A673 (cell line): ENCODE measurements at regions of chr15 and their contacts with region 1.

Region 1: DNA sequence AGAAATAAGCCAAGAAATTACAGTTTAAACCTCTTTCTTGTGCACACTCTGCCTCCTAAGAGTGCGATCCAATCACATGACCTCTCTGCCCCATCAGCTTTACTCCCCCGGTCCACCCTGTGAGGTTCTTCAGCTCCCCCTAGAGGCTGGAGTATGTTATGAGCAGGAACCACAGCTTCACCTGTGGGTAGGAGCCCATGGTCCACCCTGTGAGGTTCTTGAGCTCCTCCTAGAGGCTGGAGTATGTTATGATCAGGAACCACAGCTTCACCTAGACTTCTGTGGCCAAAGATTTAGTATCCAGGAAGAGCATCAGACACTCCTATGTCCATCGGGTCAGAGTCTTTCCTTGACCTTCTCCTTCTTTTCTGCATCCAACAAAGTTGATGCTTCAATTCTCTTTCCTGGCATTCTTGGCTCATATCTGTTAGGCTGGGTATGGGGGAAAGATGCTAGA is 163.9 kb downstream of the MINAR1 start:
- DNase-seq: peak; percentile 94
- H3K4me3 ChIP-seq: no peak overlapping the region
- H3K27ac ChIP-seq: no peak overlapping the region
- H3K4me1 ChIP-seq: no peaks in the 10 kb centered on the region
- H3K27me3 ChIP-seq: peaks cover 9% of the 10 kb centered on the region
- CTCF ChIP-seq: peak; percentile 99

Region 2: DNA sequence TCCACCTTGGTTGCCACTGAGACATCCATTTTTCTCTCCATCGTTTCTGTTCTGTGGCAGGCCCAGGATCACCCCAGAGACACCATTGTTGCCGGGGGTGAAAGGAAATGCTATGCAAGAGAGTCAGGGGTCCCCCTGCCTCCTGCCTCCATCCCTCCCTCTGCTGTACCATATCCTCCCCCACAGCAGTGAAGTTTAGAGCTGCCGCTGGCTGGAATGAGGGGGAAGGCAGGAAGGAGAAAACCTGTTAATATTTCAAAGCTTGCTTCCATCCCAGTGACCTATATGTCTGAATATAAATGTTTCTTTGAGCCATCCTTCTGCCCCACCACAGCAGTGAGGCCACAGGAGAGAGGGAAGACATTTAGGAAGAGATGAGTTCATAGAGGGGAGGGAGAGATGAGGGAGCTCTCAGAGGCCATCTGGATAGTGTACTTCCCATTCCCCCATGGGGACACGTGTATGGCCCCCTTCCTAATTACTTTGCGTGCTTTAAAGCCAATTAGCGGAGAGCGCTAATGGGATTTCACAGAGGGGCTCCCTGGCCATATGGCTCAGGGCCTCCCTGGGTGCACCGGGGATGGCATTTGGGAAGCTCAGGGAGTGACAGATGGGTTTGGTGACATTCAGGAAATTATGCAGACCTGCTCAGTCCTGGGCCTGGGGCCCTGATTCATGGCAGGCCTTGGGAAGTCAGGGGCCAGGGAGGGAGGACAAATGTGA is 914.6 kb before region 1 on chr15:
- CTCF ChIA-PET with region 1: no interaction called
- POLR2A ChIA-PET with region 1: no interaction called
- intact Hi-C with region 1: no loop called
- DNase-seq: peak; percentile 71
- H3K4me3 ChIP-seq: no peak overlapping the region
- H3K27ac ChIP-seq: no peak overlapping the region
- H3K4me1 ChIP-seq: peaks cover 18% of the 10 kb centered on the region
- H3K27me3 ChIP-seq: peaks cover 87% of the 10 kb centered on the region
- CTCF ChIP-seq: no peak

Region 3: DNA sequence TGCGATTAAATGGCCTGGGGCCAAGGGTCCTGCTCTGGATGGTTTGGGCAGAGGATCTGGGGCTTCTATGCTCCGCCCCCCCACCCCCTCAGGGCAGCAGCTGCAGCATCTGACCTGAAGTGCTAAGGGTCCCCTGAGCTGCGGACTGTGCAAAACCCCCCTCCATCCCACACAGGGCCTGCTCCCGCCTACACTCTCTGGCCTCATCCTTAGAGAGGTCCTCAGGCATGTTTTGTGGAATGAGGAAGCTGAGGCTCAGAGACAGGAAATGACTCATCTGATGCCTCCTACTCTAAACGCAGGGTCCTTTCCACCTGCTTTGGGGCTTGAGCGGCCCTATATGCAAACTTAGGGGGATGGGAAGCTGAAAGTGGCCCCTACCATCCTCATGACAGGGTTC is 591.7 kb before region 1 on chr15:
- CTCF ChIA-PET with region 1: no interaction called
- POLR2A ChIA-PET with region 1: no interaction called
- intact Hi-C with region 1: no loop called
- DNase-seq: peak; percentile 88
- H3K4me3 ChIP-seq: no peak overlapping the region
- H3K27ac ChIP-seq: peak overlapping the region; percentile 46
- H3K4me1 ChIP-seq: peaks cover 17% of the 10 kb centered on the region
- H3K27me3 ChIP-seq: no peaks in the 10 kb centered on the region
- CTCF ChIP-seq: no peak

Region 4: DNA sequence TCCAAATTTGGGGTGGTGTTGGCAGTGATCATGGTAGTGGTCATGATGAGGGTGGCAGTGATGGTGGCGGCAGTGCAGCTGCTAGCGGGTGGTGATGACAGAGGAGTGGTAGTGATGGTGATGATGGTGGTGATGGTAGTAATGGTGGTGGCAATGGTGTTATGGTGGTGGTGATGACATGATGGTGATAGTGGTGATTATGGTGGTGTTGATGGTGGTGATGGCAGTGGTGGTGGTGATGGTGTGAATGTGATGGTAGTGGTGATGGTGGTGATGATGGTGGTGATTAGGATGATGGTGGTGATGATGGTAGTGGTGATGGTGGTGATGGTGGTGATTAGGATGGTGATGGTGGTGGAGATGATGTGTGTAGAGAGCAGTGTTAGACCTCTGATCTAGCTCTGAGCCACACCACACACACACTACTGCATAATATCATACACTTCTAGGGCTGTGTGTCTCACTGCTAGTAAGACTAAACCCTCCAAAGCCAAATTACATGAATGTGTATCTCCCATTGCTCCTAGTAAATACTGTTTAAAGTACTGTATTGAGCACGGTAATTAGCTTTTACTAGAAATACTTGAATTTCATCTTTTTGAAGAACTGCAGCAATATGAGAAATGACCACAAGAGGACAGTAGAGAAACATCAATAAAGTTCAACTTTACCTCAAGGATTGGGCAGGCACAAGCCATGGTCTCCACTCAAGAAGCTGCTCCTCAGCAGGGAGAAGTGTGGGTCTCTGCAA is 256.3 kb before region 1 on chr15:
- CTCF ChIA-PET with region 1: interaction called, 19 read pairs
- POLR2A ChIA-PET with region 1: no interaction called
- intact Hi-C with region 1: loop called (anchors 2 kb)
- DNase-seq: peak; percentile 58
- H3K4me3 ChIP-seq: no peak overlapping the region
- H3K27ac ChIP-seq: no peak overlapping the region
- H3K4me1 ChIP-seq: no peaks in the 10 kb centered on the region
- H3K27me3 ChIP-seq: no peaks in the 10 kb centered on the region
- CTCF ChIP-seq: peak; percentile 77

Region 5: DNA sequence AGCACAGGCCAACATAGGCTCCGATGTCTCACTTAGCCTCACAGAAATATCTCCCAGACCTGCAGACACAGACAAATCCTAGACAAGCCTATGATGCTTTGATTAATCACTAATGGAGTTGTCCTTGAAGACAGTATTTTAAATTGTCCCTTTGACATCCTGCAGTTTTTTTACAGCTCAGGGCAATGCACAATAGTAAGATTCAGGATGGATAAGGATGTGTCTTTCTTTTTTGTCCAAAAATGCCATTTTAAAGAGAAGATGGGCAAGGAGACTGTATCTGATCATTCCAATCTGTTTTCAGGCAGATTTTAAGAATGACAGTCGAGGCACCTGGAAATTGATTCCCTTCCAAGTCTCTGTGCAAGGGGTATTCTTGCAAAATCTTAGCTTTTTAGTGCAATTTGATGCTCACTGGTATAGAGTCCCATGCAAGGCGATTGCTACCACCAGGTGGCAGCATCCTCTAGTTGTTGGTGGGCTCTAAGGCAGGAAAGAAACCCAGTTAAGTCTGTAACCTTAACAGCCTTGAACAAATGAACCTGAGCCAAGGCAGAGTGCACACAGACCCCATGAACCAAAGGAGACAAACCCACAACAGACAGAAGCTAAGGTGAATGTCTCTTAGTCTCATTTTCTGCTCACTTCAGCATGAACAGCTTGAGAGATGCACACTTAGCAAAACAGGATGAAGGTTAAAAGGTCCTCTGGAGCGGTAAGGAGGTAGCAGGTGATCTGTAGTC is 215.2 kb before region 1 on chr15:
- CTCF ChIA-PET with region 1: interaction called, 54 read pairs
- POLR2A ChIA-PET with region 1: no interaction called
- intact Hi-C with region 1: loop called (anchors 1 kb)
- DNase-seq: peak; percentile 79
- H3K4me3 ChIP-seq: no peak overlapping the region
- H3K27ac ChIP-seq: no peak overlapping the region
- H3K4me1 ChIP-seq: no peaks in the 10 kb centered on the region
- H3K27me3 ChIP-seq: no peaks in the 10 kb centered on the region
- CTCF ChIP-seq: peak; percentile 85

Region 6: DNA sequence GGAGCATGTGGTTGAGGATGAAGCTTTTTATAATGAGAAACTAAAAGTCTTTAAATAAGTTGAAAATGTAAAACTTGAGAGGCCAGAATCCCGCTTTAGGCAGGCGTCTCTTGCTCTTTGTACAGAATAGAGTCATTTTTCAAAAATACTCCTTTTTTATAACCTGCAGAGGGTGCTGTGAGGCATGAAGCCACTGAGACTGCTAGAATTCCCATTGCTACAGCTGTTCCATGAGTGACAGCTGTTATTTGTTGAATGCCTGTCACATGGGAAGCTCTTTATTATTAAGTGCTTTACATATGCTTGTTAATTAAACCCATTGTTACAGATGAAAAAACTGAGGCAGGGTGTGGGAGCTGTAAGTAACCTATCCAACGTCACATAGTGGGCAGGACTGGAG is 145.4 kb before region 1 on chr15:
- CTCF ChIA-PET with region 1: interaction called, 13 read pairs
- POLR2A ChIA-PET with region 1: no interaction called
- intact Hi-C with region 1: no loop called
- DNase-seq: peak; percentile 36
- H3K4me3 ChIP-seq: no peak overlapping the region
- H3K27ac ChIP-seq: no peak overlapping the region
- H3K4me1 ChIP-seq: no peaks in the 10 kb centered on the region
- H3K27me3 ChIP-seq: peaks cover 3% of the 10 kb centered on the region
- CTCF ChIP-seq: peak; percentile 55

Region 7: DNA sequence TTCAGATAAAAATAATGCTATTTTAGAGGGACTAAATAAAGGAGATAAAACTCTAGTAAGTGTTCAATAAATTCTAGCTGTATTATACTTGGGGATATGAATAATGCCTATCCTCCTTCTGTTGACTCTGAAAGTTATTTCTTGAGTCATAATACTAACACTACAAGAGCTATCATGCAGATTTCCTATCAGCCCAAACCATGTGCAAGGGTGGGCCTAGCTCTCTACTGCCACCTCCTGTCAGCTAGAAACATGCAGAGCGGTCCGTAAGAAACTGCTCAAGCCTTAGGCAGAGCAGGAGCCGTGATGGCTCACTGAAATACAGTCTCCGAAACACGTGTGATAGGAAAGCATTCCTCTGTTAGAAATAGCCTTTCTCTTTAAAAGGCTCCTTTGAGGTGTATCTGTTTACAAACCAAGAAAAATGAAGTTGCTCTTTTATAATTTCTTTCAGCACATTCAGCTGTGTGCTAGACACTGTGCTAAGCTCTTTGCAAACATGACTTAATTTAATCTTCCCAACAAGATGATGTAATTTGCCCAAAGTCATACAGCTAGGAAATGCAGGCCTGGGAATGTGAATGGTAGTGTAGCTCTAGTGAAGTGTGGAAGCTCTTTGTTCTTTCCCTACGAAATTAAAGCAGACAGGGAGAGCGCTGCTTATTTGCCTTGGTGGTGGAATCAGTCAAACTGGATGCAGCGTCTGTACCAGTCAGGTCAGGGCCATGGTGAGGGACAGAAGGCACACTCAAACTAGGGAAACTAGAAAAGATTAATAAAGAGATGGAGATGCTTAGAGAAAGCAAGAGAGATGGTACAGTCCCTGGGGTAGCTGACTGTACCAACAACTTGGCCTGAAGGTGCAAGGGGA is 257.6 kb after region 1 on chr15:
- CTCF ChIA-PET with region 1: interaction called, 5 read pairs
- POLR2A ChIA-PET with region 1: no interaction called
- intact Hi-C with region 1: loop called (anchors 5 kb)
- DNase-seq: peak; percentile 79
- H3K4me3 ChIP-seq: no peak overlapping the region
- H3K27ac ChIP-seq: no peak overlapping the region
- H3K4me1 ChIP-seq: no peaks in the 10 kb centered on the region
- H3K27me3 ChIP-seq: no peaks in the 10 kb centered on the region
- CTCF ChIP-seq: peak; percentile 94